CD14-positive monocyte (primary cell): ENCODE measurements at regions of chr10 and their contacts with region 1.

Region 1: DNA sequence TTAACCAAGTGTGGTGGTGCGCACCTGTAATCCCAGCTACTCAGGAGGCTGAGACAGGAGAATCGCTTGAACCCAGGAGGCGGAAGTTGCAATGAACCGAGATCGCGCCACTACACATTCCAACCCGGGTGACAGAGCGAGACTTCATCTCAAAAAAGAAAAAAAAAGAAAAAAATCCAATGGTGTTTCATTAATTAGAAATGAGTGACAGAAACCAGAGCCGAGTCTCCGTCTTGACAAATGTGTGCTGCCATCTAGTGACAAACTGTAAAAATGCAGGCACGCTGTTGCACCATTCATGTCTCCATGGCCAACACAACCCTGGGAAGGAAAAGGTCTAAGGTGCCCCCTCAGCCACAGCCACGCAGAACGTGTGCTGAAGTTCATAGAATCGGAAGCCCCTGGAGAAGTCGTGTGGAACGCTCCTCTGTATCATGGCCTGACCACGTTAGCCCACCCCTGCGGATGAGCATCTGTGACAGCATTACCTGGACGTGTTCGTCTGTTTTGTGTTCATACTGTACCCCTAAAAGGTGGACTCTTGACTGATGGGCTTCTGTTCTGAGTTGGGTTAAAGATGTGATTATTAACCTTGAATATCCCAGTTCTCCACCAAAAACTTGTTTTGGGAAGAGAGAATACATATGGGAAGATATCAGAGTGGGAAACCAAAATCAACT is 94.9 kb downstream of the LYZL2 start:
- DNase-seq: peak; percentile 78 to 85 (median 84)
- H3K4me3 ChIP-seq: no peak overlapping the region
- H3K4me3 Mint-ChIP-seq: no peak overlapping the region
- H3K27ac ChIP-seq: peak overlapping the region in 1 of 2 donors; percentile 48
- H3K27ac Mint-ChIP-seq: peak overlapping the region in 6 of 7 donors; percentile 63 to 90 (median 83)
- H3K4me1 ChIP-seq: peaks cover 64 to 81% of the 10 kb centered on the region in 2 donors
- H3K4me1 Mint-ChIP-seq: peaks cover 65% of the 10 kb centered on the region
- H3K27me3 ChIP-seq: no peaks in the 10 kb centered on the region
- H3K27me3 Mint-ChIP-seq: no peaks in the 10 kb centered on the region
- CTCF ChIP-seq: peak; percentile 85

Region 2: GRCh38 chr10:30392564-30392990 is 142.0 kb before region 1 on chr10:
- intact Hi-C with region 1: loop called in 1 of 2 experiments (anchors 5 kb)
- DNase-seq: peak; percentile 62 to 79 (median 76)
- H3K4me3 ChIP-seq: peak overlapping the region in 1 of 3 experiments; percentile 46
- H3K4me3 Mint-ChIP-seq: peak overlapping the region; percentile 11 to 86
- H3K27ac ChIP-seq: no peak overlapping the region
- H3K27ac Mint-ChIP-seq: peak overlapping the region in 4 of 7 donors; percentile 3 to 62 (median 40)
- H3K4me1 ChIP-seq: peaks cover 28 to 30% of the 10 kb centered on the region in 2 donors
- H3K4me1 Mint-ChIP-seq: peaks cover 26% of the 10 kb centered on the region
- H3K27me3 ChIP-seq: no peaks in the 10 kb centered on the region
- H3K27me3 Mint-ChIP-seq: peaks cover 0 to 3% (median 2%) of the 10 kb centered on the region in 3 donors
- CTCF ChIP-seq: peak; percentile 94

Region 3: DNA sequence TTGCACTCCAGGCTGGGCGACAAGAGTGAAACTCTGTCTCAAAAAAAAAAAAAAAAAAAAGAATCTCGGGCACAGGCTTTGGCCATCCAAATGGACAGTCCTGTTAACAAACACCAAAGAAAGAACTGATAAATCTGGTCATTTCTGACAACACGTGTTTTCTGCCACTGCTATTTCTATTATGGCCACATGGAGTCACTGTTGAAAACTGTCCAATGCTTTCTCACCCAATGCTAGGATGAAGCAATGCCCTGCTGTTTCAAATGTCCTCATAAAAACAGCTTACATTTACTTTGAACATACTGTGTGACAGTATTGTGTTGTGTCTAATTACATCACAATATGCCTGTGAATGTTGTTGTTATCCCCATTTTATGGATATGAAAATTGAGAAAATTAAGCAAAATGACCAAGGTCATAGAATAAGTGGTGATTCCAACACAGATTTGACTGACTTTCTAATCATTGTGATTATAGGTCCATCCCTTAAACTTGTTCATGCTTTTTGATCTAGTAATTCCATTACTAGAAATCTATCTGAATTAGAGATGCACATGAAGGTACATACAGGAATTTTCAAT is 120.5 kb before region 1 on chr10:
- intact Hi-C with region 1: loop called (anchors 5 kb)
- DNase-seq: peak; percentile 72 to 86 (median 86)
- H3K4me3 ChIP-seq: no peak overlapping the region
- H3K4me3 Mint-ChIP-seq: no peak overlapping the region
- H3K27ac ChIP-seq: peak overlapping the region in 1 of 2 donors; percentile 56
- H3K27ac Mint-ChIP-seq: peak overlapping the region in 6 of 7 donors; percentile 3 to 86 (median 48)
- H3K4me1 ChIP-seq: peaks cover 30 to 43% of the 10 kb centered on the region in 2 donors
- H3K4me1 Mint-ChIP-seq: peaks cover 41% of the 10 kb centered on the region
- H3K27me3 ChIP-seq: no peaks in the 10 kb centered on the region
- H3K27me3 Mint-ChIP-seq: no peaks in the 10 kb centered on the region
- CTCF ChIP-seq: peak; percentile 84

Region 4: GRCh38 chr10:30447125-30447799 is 87.3 kb before region 1 on chr10:
- intact Hi-C with region 1: loop called in 1 of 2 experiments (anchors 10 kb)
- DNase-seq: peak; percentile 36 to 80 (median 58)
- H3K4me3 ChIP-seq: no peak overlapping the region
- H3K4me3 Mint-ChIP-seq: no peak overlapping the region
- H3K27ac ChIP-seq: peak overlapping the region in 1 of 2 donors; percentile 30
- H3K27ac Mint-ChIP-seq: peak overlapping the region in 2 of 7 donors; percentile 65 to 71
- H3K4me1 ChIP-seq: peaks cover 6 to 10% of the 10 kb centered on the region in 2 donors
- H3K4me1 Mint-ChIP-seq: peaks cover 17% of the 10 kb centered on the region
- H3K27me3 ChIP-seq: no peaks in the 10 kb centered on the region
- H3K27me3 Mint-ChIP-seq: peaks cover 0 to 2% (median 0%) of the 10 kb centered on the region in 3 donors
- CTCF ChIP-seq: no peak

Region 5: DNA sequence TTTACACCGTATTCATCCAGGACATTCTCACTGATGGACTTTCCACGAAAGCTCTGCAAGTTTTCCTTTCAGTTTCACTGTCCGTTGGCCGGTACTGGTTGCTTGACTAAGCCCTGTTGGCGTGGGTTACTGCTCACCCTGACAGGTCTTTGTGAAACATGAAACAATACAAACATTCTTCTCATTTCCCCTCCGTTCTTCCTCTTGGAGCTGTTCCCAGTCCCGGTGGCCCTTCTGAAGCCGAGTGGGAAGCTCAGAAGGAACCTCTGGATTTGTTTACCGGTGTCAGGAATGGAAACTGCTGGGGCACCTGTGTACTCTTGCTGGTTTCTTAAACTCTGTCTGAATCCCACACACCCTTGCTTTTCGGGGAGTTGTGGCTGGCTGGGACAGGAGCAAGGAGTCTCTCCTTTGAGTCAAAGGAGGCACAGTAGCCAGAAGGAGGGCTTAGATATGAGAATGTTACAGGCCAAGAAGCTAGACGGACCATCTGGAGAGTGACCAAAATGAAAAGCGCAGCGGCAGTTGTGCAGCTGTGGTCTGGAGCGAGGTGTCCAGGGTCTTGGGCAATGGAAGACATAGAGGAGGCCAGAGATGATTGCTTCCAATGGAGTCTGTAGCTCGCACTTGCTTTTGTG is 49.3 kb after region 1 on chr10:
- intact Hi-C with region 1: loop called (anchors 5 to 10 kb)
- DNase-seq: peak; percentile 44 to 91 (median 74)
- H3K4me3 ChIP-seq: peak overlapping the region; percentile 12 to 69 (median 49)
- H3K4me3 Mint-ChIP-seq: peak overlapping the region; percentile 65 to 78
- H3K27ac ChIP-seq: peak overlapping the region; percentile 62 to 82
- H3K27ac Mint-ChIP-seq: peak overlapping the region; percentile 70 to 96 (median 91)
- H3K4me1 ChIP-seq: peaks cover 34 to 43% of the 10 kb centered on the region in 2 donors
- H3K4me1 Mint-ChIP-seq: peaks cover 35% of the 10 kb centered on the region
- H3K27me3 ChIP-seq: no peaks in the 10 kb centered on the region
- H3K27me3 Mint-ChIP-seq: peaks cover 0 to 2% (median 0%) of the 10 kb centered on the region in 3 donors
- CTCF ChIP-seq: no peak